CD4-positive, alpha-beta memory T cell (primary cell): ENCODE measurements at regions of chr1 and their contacts with region 1.

Region 1: GRCh38 chr1:203593723-203594122 is 32.9 kb upstream of the ATP2B4 start:
- DNase-seq: peak; percentile 49 to 63 (median 55)
- H3K4me3 ChIP-seq: no peak overlapping the region
- H3K4me3 Mint-ChIP-seq: no peak overlapping the region
- H3K27ac ChIP-seq: no peak overlapping the region
- H3K27ac Mint-ChIP-seq: peak overlapping the region in 2 of 7 donors; percentile 1 to 33
- H3K4me1 ChIP-seq: peaks cover 3% of the 10 kb centered on the region
- H3K4me1 Mint-ChIP-seq: peaks cover 5 to 11% (median 7%) of the 10 kb centered on the region in 4 donors
- H3K27me3 ChIP-seq: no peaks in the 10 kb centered on the region
- H3K27me3 Mint-ChIP-seq: peaks cover 0 to 4% of the 10 kb centered on the region in 2 donors

Region 2: GRCh38 chr1:202852163-202852904 is 741.4 kb before region 1 on chr1:
- CTCF ChIA-PET with region 1: no interaction called
- POLR2A ChIA-PET with region 1: no interaction called
- intact Hi-C with region 1: no loop called
- DNase-seq: peak in 3 of 5 donors; percentile 24 to 30 (median 27)
- H3K4me3 ChIP-seq: no peak overlapping the region
- H3K4me3 Mint-ChIP-seq: no peak overlapping the region
- H3K27ac ChIP-seq: no peak overlapping the region
- H3K27ac Mint-ChIP-seq: no peak overlapping the region
- H3K4me1 ChIP-seq: no peaks in the 10 kb centered on the region
- H3K4me1 Mint-ChIP-seq: no peaks in the 10 kb centered on the region
- H3K27me3 ChIP-seq: no peaks in the 10 kb centered on the region
- H3K27me3 Mint-ChIP-seq: no peaks in the 10 kb centered on the region

Region 3: GRCh38 chr1:203504397-203505250 is 89.1 kb before region 1 on chr1:
- CTCF ChIA-PET with region 1: interaction called, 20 read pairs
- POLR2A ChIA-PET with region 1: no interaction called
- intact Hi-C with region 1: loop called (anchors 1 kb)
- DNase-seq: peak; percentile 60 to 70 (median 63)
- H3K4me3 ChIP-seq: no peak overlapping the region
- H3K4me3 Mint-ChIP-seq: no peak overlapping the region
- H3K27ac ChIP-seq: no peak overlapping the region
- H3K27ac Mint-ChIP-seq: peak overlapping the region in 1 of 7 donors; percentile 3
- H3K4me1 ChIP-seq: no peaks in the 10 kb centered on the region
- H3K4me1 Mint-ChIP-seq: peaks cover 0 to 7% (median 4%) of the 10 kb centered on the region in 4 donors
- H3K27me3 ChIP-seq: no peaks in the 10 kb centered on the region
- H3K27me3 Mint-ChIP-seq: no peaks in the 10 kb centered on the region

Region 4: GRCh38 chr1:203603940-203604591 is 10.3 kb after region 1 on chr1:
- CTCF ChIA-PET with region 1: interaction called, 43 read pairs
- POLR2A ChIA-PET with region 1: interaction called, 4 read pairs
- intact Hi-C with region 1: no loop called
- DNase-seq: no peak
- H3K4me3 ChIP-seq: no peak overlapping the region
- H3K4me3 Mint-ChIP-seq: peak overlapping the region in 1 of 8 donors; percentile 37
- H3K27ac ChIP-seq: no peak overlapping the region
- H3K27ac Mint-ChIP-seq: peak overlapping the region in 5 of 7 donors; percentile 23 to 69 (median 61)
- H3K4me1 ChIP-seq: peaks cover 49% of the 10 kb centered on the region
- H3K4me1 Mint-ChIP-seq: peaks cover 33 to 55% (median 42%) of the 10 kb centered on the region in 4 donors
- H3K27me3 ChIP-seq: no peaks in the 10 kb centered on the region
- H3K27me3 Mint-ChIP-seq: no peaks in the 10 kb centered on the region

Region 5: GRCh38 chr1:203638950-203639349 is 45.2 kb after region 1 on chr1:
- CTCF ChIA-PET with region 1: interaction called, 10 read pairs
- POLR2A ChIA-PET with region 1: no interaction called
- intact Hi-C with region 1: loop called (anchors 1 kb)
- DNase-seq: no peak
- H3K4me3 ChIP-seq: no peak overlapping the region
- H3K4me3 Mint-ChIP-seq: peak overlapping the region in 7 of 8 donors; percentile 64 to 85 (median 73)
- H3K27ac ChIP-seq: peak overlapping the region; percentile 28
- H3K27ac Mint-ChIP-seq: peak overlapping the region; percentile 44 to 90 (median 84)
- H3K4me1 ChIP-seq: peaks cover 88% of the 10 kb centered on the region
- H3K4me1 Mint-ChIP-seq: peaks cover 63 to 89% (median 74%) of the 10 kb centered on the region in 4 donors
- H3K27me3 ChIP-seq: no peaks in the 10 kb centered on the region
- H3K27me3 Mint-ChIP-seq: no peaks in the 10 kb centered on the region

Region 6: GRCh38 chr1:203649999-203650855 is 56.5 kb after region 1 on chr1:
- CTCF ChIA-PET with region 1: interaction called, 12 read pairs
- POLR2A ChIA-PET with region 1: interaction called, 7 read pairs
- intact Hi-C with region 1: no loop called
- DNase-seq: peak; percentile 59 to 95 (median 67)
- H3K4me3 ChIP-seq: peak overlapping the region; percentile 13 to 54
- H3K4me3 Mint-ChIP-seq: peak overlapping the region; percentile 82 to 93 (median 88)
- H3K27ac ChIP-seq: peak overlapping the region; percentile 78
- H3K27ac Mint-ChIP-seq: peak overlapping the region; percentile 96 to 99 (median 98)
- H3K4me1 ChIP-seq: peaks cover 74% of the 10 kb centered on the region
- H3K4me1 Mint-ChIP-seq: peaks cover 50 to 81% (median 68%) of the 10 kb centered on the region in 4 donors
- H3K27me3 ChIP-seq: no peaks in the 10 kb centered on the region
- H3K27me3 Mint-ChIP-seq: no peaks in the 10 kb centered on the region

Region 7: DNA sequence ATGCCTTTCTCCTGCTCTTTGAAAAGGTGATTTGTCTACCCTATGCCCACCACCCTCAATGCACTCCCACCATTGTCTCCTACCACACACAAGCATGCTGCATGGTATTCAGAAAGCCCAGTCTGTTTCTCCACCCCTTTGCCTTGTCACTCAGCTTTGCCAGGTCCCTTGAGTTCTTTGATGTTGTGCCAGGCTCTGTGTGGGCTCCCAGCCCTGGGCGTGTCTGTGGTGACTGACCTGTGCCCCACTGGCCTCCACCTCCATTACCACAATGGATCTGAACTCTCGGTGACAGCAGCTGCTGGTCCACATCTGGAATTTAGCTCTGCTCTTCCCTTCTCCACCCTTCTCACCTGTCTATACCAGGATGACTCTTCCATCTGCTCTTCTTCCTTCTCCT is 67.8 kb after region 1 on chr1:
- CTCF ChIA-PET with region 1: no interaction called
- POLR2A ChIA-PET with region 1: no interaction called
- intact Hi-C with region 1: no loop called
- DNase-seq: no peak
- H3K4me3 ChIP-seq: no peak overlapping the region
- H3K4me3 Mint-ChIP-seq: peak overlapping the region in 2 of 8 donors; percentile 46 to 71
- H3K27ac ChIP-seq: no peak overlapping the region
- H3K27ac Mint-ChIP-seq: peak overlapping the region; percentile 54 to 83 (median 75)
- H3K4me1 ChIP-seq: peaks cover 67% of the 10 kb centered on the region
- H3K4me1 Mint-ChIP-seq: peaks cover 48 to 74% (median 62%) of the 10 kb centered on the region in 4 donors
- H3K27me3 ChIP-seq: no peaks in the 10 kb centered on the region
- H3K27me3 Mint-ChIP-seq: no peaks in the 10 kb centered on the region

Region 8: DNA sequence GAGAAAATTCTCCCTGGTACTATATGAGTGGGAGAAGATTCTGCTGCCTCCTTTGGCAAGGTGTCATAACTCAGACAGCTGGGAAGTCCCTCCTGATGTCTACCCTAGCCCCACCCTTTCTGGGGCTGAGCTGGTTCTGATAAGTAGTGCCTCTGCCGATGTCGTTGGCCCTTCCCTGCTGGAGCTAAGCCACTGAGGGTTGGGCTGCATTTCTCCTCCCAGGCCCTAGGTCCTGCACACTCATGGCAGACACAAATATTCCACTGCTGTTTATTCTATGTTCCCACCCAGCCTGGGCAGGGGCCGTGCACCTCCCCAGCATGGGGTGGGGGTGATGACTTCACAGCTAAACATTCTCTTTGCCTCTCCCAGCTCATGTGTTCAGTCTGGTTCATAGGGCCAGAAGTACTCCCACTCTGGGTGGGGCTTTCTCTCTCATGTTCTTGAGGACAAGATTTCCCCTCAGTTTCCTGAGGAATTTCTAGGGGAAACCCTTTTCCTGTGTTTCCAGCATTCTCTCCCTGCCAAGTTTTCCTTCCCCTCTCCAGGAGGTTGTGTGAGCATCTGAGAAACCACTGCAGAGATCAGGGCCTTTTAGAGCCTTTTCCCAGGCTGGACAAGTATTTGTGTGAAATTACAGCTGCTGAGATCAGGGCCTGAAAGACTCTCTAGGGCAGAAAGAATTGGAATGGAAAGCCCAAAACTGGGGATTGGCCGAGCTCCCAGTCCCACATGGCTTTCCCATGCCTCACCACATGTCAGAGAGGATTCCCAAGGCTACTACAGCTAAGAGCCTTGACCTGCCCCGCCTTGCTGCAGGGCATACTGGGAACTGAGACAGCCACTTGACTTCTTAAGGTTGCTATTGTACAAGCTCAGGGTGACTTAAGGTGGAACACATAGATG is 99.1 kb after region 1 on chr1:
- CTCF ChIA-PET with region 1: interaction called, 16 read pairs
- POLR2A ChIA-PET with region 1: no interaction called
- intact Hi-C with region 1: no loop called
- DNase-seq: no peak
- H3K4me3 ChIP-seq: no peak overlapping the region
- H3K4me3 Mint-ChIP-seq: peak overlapping the region in 7 of 8 donors; percentile 18 to 78 (median 46)
- H3K27ac ChIP-seq: peak overlapping the region; percentile 42
- H3K27ac Mint-ChIP-seq: peak overlapping the region; percentile 85 to 97 (median 91)
- H3K4me1 ChIP-seq: peaks cover 64% of the 10 kb centered on the region
- H3K4me1 Mint-ChIP-seq: peaks cover 49 to 88% (median 64%) of the 10 kb centered on the region in 4 donors
- H3K27me3 ChIP-seq: no peaks in the 10 kb centered on the region
- H3K27me3 Mint-ChIP-seq: no peaks in the 10 kb centered on the region

Region 9: GRCh38 chr1:203702130-203702577 is 108.4 kb after region 1 on chr1:
- CTCF ChIA-PET with region 1: interaction called, 113 read pairs
- POLR2A ChIA-PET with region 1: interaction called, 12 read pairs
- intact Hi-C with region 1: loop called (anchors 1 kb)
- DNase-seq: peak; percentile 46 to 68 (median 57)
- H3K4me3 ChIP-seq: no peak overlapping the region
- H3K4me3 Mint-ChIP-seq: no peak overlapping the region
- H3K27ac ChIP-seq: no peak overlapping the region
- H3K27ac Mint-ChIP-seq: peak overlapping the region; percentile 26 to 97 (median 89)
- H3K4me1 ChIP-seq: peaks cover 3% of the 10 kb centered on the region
- H3K4me1 Mint-ChIP-seq: peaks cover 5 to 15% (median 10%) of the 10 kb centered on the region in 4 donors
- H3K27me3 ChIP-seq: no peaks in the 10 kb centered on the region
- H3K27me3 Mint-ChIP-seq: no peaks in the 10 kb centered on the region